GM12878 (cell line): ENCODE measurements at regions of chr1 and their contacts with region 1.

Region 1: GRCh38 chr1:244952940-244953339 is 88.6 kb upstream of the HNRNPU start:
- DNase-seq: no peak
- ATAC-seq: peak; percentile 90
- H3K4me3 ChIP-seq: no peak overlapping the region
- H3K27ac ChIP-seq: 0 out of 2 replicates have a peak overlapping the region, but pooled peaks have one; percentile 7
- H3K4me1 ChIP-seq: peaks cover 6% of the 10 kb centered on the region
- H3K27me3 ChIP-seq: no peaks in the 10 kb centered on the region
- CTCF ChIP-seq: no peak
- EP300 ChIP-seq: no peak
- POLR2A ChIP-seq: no peak
- RAD21 ChIP-seq: no peak

Region 2: GRCh38 chr1:244887281-244887680 is 65.7 kb before region 1 on chr1:
- CTCF ChIA-PET with region 1: no interaction called
- POLR2A ChIA-PET with region 1: no interaction called
- RAD21 ChIA-PET with region 1: no interaction called
- SMC1A ChIA-PET with region 1: no interaction called
- in situ Hi-C with region 1: no loop called
- intact Hi-C with region 1: no loop called
- DNase-seq: no peak
- ATAC-seq: no peak
- H3K4me3 ChIP-seq: no peak overlapping the region
- H3K27ac ChIP-seq: no peak overlapping the region
- H3K4me1 ChIP-seq: no peaks in the 10 kb centered on the region
- H3K27me3 ChIP-seq: no peaks in the 10 kb centered on the region; a peak in 1 of 4 replicates
- CTCF ChIP-seq: no peak
- EP300 ChIP-seq: no peak
- POLR2A ChIP-seq: no peak
- RAD21 ChIP-seq: no peak

Region 3: DNA sequence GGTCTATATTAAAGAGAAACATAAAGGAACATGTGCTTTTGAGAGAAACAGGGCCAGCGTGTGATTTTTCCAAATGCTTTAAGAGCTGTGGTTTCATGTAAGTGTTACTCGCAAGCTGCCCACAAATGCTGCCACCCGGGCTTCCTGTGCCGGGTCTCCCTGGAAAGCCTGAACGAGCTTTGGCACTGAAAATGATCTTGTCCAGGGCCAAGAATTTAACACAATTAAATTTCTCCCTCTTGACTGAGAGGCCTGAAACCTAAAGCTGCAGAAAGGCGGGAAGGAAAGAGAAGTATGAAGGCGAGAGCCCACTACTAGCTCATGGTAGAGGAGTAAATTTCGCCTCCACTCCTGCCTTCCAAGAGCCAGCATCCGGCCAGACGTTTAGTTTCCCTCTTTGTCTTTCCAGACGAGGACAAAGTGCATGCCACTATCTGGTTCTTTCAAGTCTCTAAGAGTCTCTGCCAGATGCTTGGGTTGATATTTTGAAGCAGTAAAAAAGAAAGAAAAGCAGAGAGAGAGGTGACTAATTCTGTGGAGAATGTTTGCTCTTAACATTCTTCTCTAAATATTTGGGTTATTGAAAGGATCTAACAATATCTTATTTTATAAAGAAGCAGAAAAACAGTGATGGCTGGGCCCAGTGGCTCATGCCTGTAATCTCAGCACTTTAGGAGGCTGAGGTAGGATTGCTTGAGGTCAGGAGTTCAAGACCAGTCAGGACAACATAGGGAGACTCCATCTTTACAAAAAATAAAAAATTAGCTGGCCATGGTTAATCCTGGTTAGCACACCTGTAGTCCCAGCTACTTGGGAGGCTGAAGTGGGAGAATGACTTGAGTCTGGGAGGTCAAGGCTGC is 11.4 kb after region 1 on chr1:
- CTCF ChIA-PET with region 1: interaction called, 4 read pairs
- POLR2A ChIA-PET with region 1: interaction called, 7 read pairs
- RAD21 ChIA-PET with region 1: interaction called, 3 read pairs
- SMC1A ChIA-PET with region 1: interaction called, 20 read pairs
- in situ Hi-C with region 1: no loop called
- intact Hi-C with region 1: no loop called
- DNase-seq: no peak
- ATAC-seq: peak; percentile 45
- H3K4me3 ChIP-seq: no peak overlapping the region
- H3K27ac ChIP-seq: no peak overlapping the region
- H3K4me1 ChIP-seq: peaks cover 7% of the 10 kb centered on the region; the same call in 1 of the 2 replicates
- H3K27me3 ChIP-seq: no peaks in the 10 kb centered on the region
- CTCF ChIP-seq: no peak
- EP300 ChIP-seq: no peak
- POLR2A ChIP-seq: no peak
- RAD21 ChIP-seq: no peak

Region 4: GRCh38 chr1:245039196-245039595 is 86.3 kb after region 1 on chr1:
- CTCF ChIA-PET with region 1: no interaction called
- POLR2A ChIA-PET with region 1: interaction called, 10 read pairs
- RAD21 ChIA-PET with region 1: interaction called, 4 read pairs
- SMC1A ChIA-PET with region 1: interaction called, 4 read pairs
- in situ Hi-C with region 1: no loop called
- intact Hi-C with region 1: no loop called
- DNase-seq: no peak
- ATAC-seq: no peak
- H3K4me3 ChIP-seq: no peak overlapping the region
- H3K27ac ChIP-seq: no peak overlapping the region
- H3K4me1 ChIP-seq: no peaks in the 10 kb centered on the region
- H3K27me3 ChIP-seq: no peaks in the 10 kb centered on the region
- CTCF ChIP-seq: no peak
- EP300 ChIP-seq: no peak
- POLR2A ChIP-seq: no peak
- RAD21 ChIP-seq: no peak